Posterior cingulate gyrus (tissue), 11 donors: ENCODE measurements at regions of chr7 and their contacts with region 1.

Region 1: GRCh38 chr7:127708788-127709187 is 56.8 kb downstream of the SND1 start:
- DNase-seq: peak in 5 of 10 donors; percentile 55 to 81 (median 79)

Region 2: GRCh38 chr7:127571741-127572505 is 136.9 kb before region 1 on chr7:
- intact Hi-C with region 1: no loop called
- DNase-seq: no peak

Region 3: GRCh38 chr7:127792528-127793342 is 83.9 kb after region 1 on chr7:
- intact Hi-C with region 1: no loop called
- DNase-seq: peak in 3 of 10 donors; percentile 27 to 70 (median 48)

Region 4: GRCh38 chr7:127905491-127906330 is 196.9 kb after region 1 on chr7:
- intact Hi-C with region 1: no loop called
- DNase-seq: no peak

Region 5: GRCh38 chr7:128031901-128032604 is 323.3 kb after region 1 on chr7:
- intact Hi-C with region 1: loop called (anchors 5 kb)
- DNase-seq: peak in 5 of 10 donors; percentile 47 to 93 (median 63)

Region 6: DNA sequence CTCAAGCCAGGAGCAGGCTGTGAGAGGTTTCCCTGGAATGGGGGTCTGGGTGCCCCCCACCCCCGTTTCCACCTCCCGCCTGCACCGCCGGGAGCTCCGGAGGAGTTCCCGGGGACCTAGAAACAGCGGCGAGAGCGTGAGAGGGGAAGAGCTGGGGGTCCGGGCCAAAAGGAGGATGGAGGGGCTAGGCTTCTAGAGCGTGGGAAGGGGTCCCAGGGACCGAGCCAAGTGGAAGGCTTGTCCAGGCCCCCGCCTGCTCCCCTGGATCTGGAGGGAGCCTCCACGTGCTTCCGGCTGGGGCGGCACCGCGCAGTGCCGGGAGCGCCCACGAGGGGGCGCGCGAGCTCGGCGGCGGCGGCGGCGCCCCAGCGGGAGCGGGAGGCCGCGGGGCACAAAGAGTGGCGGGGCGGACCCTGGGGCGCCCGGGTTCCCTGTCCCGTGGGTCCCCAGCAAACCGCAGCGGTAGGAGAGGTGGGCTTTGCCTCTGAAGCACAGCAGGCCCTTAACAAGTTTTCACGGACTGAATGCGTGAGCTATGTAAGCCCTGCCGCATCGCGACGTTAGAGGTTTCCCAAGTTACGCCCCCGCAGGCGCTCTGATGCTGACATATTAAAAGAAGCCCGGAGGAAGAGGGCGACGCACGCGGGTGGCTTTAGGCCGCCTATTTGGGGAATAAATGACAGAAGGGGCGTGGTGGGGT is 426.9 kb after region 1 on chr7:
- intact Hi-C with region 1: loop called (anchors 2 kb)
- DNase-seq: peak in 8 of 10 donors; percentile 36 to 91 (median 50)

Region 7: GRCh38 chr7:128209229-128210035 is 500.6 kb after region 1 on chr7:
- intact Hi-C with region 1: loop called (anchors 1 kb)
- DNase-seq: peak; percentile 42 to 96 (median 72)

Region 8: DNA sequence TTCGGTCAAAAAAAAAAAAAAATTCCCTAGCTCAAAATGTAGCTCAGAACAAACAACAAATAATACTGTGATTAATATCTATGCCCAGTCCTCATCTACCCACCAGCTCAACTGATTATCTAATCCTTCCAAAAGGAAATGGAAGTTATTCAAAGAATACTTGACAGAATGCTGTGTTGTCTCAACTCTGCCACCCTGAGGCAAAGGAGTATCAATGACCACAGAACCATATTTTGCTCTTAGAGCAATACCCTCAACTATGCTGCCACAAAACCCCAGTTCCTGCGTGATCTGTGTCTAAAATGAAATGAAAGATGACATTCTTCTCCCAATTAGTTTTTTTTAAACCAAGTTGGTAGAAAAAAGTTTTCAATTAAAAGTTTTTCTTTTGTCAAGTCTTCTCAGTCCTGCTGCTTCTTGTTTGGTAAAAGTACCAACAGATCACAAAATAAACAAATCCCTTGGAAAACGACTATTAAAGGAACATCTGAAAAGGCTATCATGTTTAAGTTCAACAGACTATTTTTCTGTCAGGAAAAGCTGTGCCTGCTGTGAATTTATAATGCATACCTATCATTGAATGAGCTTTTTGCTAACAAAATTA is 613.4 kb after region 1 on chr7:
- intact Hi-C with region 1: loop called (anchors 10 kb)
- DNase-seq: no peak